T-cell (primary cell): ENCODE measurements at regions of chr3 and their contacts with region 1.

Region 1: DNA sequence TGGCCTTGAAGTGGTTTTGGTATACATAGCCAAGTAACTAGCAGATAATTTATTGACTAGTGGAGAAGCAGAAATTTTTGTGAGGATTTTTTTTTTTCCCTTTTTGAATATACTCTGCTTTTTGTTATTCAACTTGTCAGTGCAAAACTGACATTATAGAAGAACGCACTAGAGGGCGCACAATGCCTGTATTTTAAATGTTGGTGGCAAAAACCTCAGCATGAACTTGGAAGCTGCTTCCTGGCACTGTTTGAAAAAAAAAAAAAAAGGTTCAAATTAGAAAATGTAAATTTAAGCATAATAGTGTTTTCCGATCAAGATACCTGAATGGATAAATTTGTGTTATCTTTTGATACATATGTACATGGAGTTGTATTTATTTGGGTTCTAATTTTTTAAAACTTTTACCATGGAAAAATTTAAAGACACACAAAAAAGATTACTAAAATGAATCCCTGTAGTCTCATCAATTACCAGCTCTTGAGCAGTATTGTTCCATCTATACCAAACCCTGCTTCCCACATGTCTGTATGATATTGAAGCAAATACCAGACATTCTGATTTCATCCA is 56.0 kb downstream of the SLC25A26 start:
- DNase-seq: peak in 34 of 35 experiments; percentile 11 to 84 (median 54)
- ATAC-seq: peak in 3 of 4 experiments; percentile 40 to 61 (median 54)
- H3K4me3 ChIP-seq: no peak overlapping the region
- H3K4me3 Mint-ChIP-seq: no peak overlapping the region
- H3K27ac ChIP-seq: no peak overlapping the region
- H3K27ac Mint-ChIP-seq: peak overlapping the region; percentile 49 to 74
- H3K4me1 ChIP-seq: peaks cover 3 to 9% of the 10 kb centered on the region in 2 experiments
- H3K4me1 Mint-ChIP-seq: peaks cover 35 to 43% (median 40%) of the 10 kb centered on the region in 3 donors
- H3K27me3 ChIP-seq: no peaks in the 10 kb centered on the region
- H3K27me3 Mint-ChIP-seq: no peaks in the 10 kb centered on the region

Region 2: DNA sequence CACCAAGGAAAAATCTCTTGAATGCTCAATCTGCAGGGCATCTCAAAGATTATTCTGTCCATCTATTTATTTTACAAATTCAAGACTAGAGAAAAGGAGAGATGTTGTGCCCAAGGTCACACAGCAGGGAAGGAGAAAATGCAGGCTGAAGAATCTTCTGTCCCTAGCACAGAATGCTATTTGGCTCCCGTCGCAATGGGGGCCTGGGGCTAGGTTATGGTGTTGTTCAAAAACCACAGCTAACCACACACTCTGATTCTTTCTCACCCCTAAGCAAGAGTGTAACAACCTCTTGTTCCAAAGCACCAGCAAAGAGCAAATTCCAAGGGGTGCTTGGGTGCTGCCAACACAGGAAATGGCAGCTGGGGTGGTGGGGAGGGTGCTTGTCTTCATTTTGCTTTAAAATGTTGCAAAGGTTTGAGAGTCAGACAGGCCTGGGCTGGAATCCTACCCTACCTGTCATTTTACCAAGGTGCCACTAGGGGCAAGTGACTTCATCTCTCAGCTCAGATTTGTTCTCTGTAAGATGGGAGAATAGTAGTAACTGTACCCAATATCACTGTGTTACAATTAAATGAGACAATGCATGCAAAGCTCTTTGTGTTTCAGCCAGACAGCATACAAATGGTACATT is 1701.5 kb before region 1 on chr3:
- CTCF ChIA-PET with region 1: no interaction called
- POLR2A ChIA-PET with region 1: no interaction called
- DNase-seq: no peak
- ATAC-seq: no peak
- H3K4me3 ChIP-seq: no peak overlapping the region
- H3K4me3 Mint-ChIP-seq: no peak overlapping the region
- H3K27ac ChIP-seq: no peak overlapping the region
- H3K27ac Mint-ChIP-seq: no peak overlapping the region
- H3K4me1 ChIP-seq: no peaks in the 10 kb centered on the region
- H3K4me1 Mint-ChIP-seq: no peaks in the 10 kb centered on the region
- H3K27me3 ChIP-seq: no peaks in the 10 kb centered on the region
- H3K27me3 Mint-ChIP-seq: no peaks in the 10 kb centered on the region

Region 3: DNA sequence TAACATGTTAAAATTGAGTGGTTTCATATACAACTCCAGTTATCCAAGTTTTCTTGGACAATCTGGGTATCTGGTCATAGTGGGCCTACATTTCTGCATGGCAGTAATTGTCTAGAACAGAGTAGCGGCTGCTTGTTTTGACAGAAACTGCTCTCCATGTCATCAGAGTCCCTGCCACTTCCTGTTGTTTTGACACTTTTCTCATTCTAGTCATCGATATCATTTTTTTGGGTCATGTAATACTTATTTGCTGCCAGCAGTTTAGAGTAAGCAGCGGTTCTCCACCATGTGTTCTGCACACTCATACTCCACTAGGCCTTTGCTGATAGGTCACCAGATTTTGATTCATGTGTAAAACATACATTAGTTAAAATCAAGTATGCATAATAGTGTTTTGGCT is 25.5 kb after region 1 on chr3:
- CTCF ChIA-PET with region 1: interaction called, 3 to 25 read pairs
- POLR2A ChIA-PET with region 1: no interaction called
- DNase-seq: peak in 31 of 35 experiments; percentile 15 to 82 (median 56)
- ATAC-seq: peak; percentile 78 to 89 (median 87)
- H3K4me3 ChIP-seq: no peak overlapping the region
- H3K4me3 Mint-ChIP-seq: peak overlapping the region in 2 of 3 donors; percentile 4 to 45
- H3K27ac ChIP-seq: peak overlapping the region; percentile 99
- H3K27ac Mint-ChIP-seq: peak overlapping the region in 1 of 2 donors; percentile 97
- H3K4me1 ChIP-seq: peaks cover 19 to 51% of the 10 kb centered on the region in 2 experiments
- H3K4me1 Mint-ChIP-seq: peaks cover 69 to 78% (median 72%) of the 10 kb centered on the region in 3 donors
- H3K27me3 ChIP-seq: no peaks in the 10 kb centered on the region
- H3K27me3 Mint-ChIP-seq: no peaks in the 10 kb centered on the region

Region 4: GRCh38 chr3:66665021-66665695 is 388.4 kb after region 1 on chr3:
- CTCF ChIA-PET with region 1: no interaction called
- POLR2A ChIA-PET with region 1: no interaction called
- DNase-seq: no peak
- ATAC-seq: no peak
- H3K4me3 ChIP-seq: no peak overlapping the region
- H3K4me3 Mint-ChIP-seq: no peak overlapping the region
- H3K27ac ChIP-seq: no peak overlapping the region
- H3K27ac Mint-ChIP-seq: no peak overlapping the region
- H3K4me1 ChIP-seq: no peaks in the 10 kb centered on the region
- H3K4me1 Mint-ChIP-seq: no peaks in the 10 kb centered on the region
- H3K27me3 ChIP-seq: no peaks in the 10 kb centered on the region
- H3K27me3 Mint-ChIP-seq: peaks cover 4% of the 10 kb centered on the region in 2 donors